Heart left ventricle (tissue), 16 donors: ENCODE measurements at regions of chr14 and their contacts with region 1.

Region 1: GRCh38 chr14:69260861-69261564 is 1.1 kb downstream of the GALNT16 start:
- DNase-seq: peak; percentile 45 to 81 (median 67)
- ATAC-seq: peak; percentile 34 to 68 (median 68)
- H3K4me3 ChIP-seq: peak overlapping the region; percentile 61 to 94 (median 68)
- H3K27ac ChIP-seq: peak overlapping the region; percentile 5 to 90 (median 82)
- H3K4me1 ChIP-seq: peaks cover 2 to 79% (median 38%) of the 10 kb centered on the region in 12 donors
- H3K27me3 ChIP-seq: peaks cover 0 to 62% (median 0%) of the 10 kb centered on the region in 9 donors
- CTCF ChIP-seq: peak; percentile 58 to 86 (median 80)
- POLR2A ChIP-seq: no peak

Region 2: DNA sequence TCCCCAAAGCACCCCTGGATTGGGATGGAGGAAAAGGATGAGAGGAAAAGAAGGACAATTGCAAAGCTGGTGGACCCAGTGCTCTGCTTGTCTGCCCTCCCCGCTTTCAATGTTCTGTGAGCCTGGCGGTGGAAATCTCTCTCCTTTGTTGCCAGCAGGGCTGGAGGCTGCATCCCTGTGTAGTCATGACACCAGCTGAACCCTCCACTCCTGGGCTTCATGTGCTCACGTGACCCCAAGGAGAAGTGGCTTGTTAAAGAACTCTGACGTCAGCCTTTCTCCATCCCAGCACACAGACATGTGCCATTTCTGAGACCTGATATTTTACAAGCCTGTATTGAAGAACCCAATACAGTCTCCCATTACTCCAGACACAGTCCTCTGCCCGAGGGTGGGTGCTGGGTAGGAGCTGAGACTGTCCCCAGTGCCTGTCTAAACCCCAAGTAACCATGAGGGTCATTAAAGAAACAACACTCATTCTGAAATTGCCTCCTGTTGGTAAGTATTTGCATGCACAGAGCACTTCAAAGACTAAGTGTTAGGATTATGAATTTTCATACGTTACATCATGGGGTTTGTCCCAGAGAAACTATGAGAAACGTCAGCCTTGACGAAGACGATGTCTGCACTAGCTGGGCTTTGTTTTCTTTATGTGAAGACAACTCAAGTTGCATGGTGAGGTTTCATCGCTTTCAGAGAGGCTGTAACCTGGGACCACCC is 20.6 kb after region 1 on chr14:
- intact Hi-C with region 1: loop called in 1 of 10 experiments (anchors 1 kb)
- DNase-seq: peak; percentile 54 to 82 (median 61)
- ATAC-seq: peak; percentile 87 to 91 (median 90)
- H3K4me3 ChIP-seq: no peak overlapping the region
- H3K27ac ChIP-seq: peak overlapping the region in 4 of 12 donors; percentile 39 to 71 (median 54)
- H3K4me1 ChIP-seq: peaks cover 0 to 27% (median 9%) of the 10 kb centered on the region in 12 donors
- H3K27me3 ChIP-seq: no peaks in the 10 kb centered on the region
- CTCF ChIP-seq: no peak
- POLR2A ChIP-seq: no peak

Region 3: DNA sequence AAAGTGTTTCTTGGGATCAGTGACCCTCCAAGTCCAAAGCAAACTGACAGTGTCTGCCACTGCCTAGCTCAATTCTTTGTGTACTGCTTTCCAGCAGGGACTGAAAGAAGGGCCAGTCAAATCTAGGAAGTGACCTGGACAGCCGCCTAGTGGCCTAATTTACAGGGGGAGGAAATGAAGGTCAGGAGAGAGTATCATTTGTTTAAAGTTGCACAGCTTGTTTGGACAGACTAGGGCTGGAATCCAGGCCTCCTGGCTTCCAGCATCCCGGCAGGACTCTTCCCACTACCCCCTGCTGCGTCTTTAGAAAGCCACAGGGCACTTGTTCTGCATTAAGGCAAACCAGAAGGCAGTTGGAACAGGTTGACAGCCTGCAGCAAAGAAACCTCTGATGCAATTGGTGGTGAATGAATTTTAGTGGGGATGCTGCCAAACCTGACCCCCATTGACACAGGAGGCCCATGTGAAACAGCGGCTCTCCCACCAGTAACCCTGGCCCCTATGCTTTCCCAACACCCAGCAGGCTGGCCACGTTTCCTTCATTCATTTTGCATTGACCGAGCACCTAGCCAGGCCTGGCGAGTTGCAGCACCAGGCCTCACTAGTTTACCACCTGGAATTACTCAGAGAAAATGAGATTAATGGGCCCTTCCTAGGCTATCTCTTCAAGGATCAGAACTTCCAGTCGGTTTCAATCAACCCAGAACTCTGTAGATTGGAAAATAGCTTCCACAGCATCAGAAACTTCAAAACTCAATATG is 27.2 kb after region 1 on chr14:
- intact Hi-C with region 1: loop called in 3 of 10 experiments (anchors 1 to 2 kb)
- DNase-seq: peak; percentile 61 to 70 (median 63)
- ATAC-seq: peak; percentile 16 to 61 (median 48)
- H3K4me3 ChIP-seq: no peak overlapping the region
- H3K27ac ChIP-seq: peak overlapping the region in 11 of 12 donors; percentile 11 to 69 (median 38)
- H3K4me1 ChIP-seq: peaks cover 3 to 70% (median 54%) of the 10 kb centered on the region in 12 donors
- H3K27me3 ChIP-seq: no peaks in the 10 kb centered on the region
- CTCF ChIP-seq: peak; percentile 28 to 60 (median 45)
- POLR2A ChIP-seq: no peak

Region 4: GRCh38 chr14:69299286-69300035 is 38.4 kb after region 1 on chr14:
- intact Hi-C with region 1: no loop called
- DNase-seq: peak in 1 of 5 donors; percentile 21
- ATAC-seq: peak in 1 of 4 donors; percentile 37
- H3K4me3 ChIP-seq: no peak overlapping the region
- H3K27ac ChIP-seq: peak overlapping the region in 1 of 12 donors; percentile 18
- H3K4me1 ChIP-seq: peaks cover 0 to 34% (median 12%) of the 10 kb centered on the region in 12 donors
- H3K27me3 ChIP-seq: no peaks in the 10 kb centered on the region
- CTCF ChIP-seq: peak in 3 of 12 donors; percentile 13 to 25 (median 17)
- POLR2A ChIP-seq: no peak

Region 5: DNA sequence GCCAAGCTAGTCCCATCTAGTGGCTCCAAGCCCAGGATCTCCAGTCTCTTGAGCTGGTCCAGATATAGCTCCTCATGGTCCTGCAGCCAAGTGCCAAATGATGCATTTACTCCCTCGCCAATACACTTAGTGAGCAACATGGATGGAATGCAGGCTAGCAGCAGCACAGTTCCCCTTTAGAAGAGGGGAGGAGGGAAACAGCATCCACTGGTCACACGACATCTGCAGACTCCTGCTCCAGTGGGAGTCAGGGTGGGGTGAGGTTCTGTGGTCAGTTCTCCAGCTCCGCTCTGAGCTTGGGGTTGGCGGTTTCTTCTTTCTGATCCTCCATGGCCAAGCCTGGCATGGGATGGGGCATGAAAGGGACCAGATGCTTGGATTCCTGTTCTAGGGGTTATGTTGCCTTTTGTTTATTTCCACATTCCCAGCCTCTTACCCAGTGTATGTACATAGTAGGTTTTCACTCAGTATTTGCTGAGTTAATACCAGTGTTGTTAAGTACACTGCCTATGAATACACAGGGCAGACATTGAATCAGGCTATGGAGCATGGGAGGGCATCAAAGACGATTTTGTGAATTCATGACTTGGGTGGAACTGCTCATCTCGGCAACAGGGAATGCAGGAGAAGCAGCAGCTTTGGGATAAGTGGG is 56.2 kb after region 1 on chr14:
- intact Hi-C with region 1: loop called in 3 of 10 experiments (anchors 1 to 5 kb)
- DNase-seq: peak in 4 of 5 donors; percentile 80 to 88 (median 82)
- ATAC-seq: peak; percentile 95 to 97 (median 95)
- H3K4me3 ChIP-seq: no peak overlapping the region
- H3K27ac ChIP-seq: peak overlapping the region in 11 of 12 donors; percentile 61 to 81 (median 74)
- H3K4me1 ChIP-seq: peaks cover 4 to 54% (median 33%) of the 10 kb centered on the region in 12 donors
- H3K27me3 ChIP-seq: no peaks in the 10 kb centered on the region
- CTCF ChIP-seq: peak in 1 of 12 donors; percentile 1
- POLR2A ChIP-seq: no peak

Region 6: DNA sequence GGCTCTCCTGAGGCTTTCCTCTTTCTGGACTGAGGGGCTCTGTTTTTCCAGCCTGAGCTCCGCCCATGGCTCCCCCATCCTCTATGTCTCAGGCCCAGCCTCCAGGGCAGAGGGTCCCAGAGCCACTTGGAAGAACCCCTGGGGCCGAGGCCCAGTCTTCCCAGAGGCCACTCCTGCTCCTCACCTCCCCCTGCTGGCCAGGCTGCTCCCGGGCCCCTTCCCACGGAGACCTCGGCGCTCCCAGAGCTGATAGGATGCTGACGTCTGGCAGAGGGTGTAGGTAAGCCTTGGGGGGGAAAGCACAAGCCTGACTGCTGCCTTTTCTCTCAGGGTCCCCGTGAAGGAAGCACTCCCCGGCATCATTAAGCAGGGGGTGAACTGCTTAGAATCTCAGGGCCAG is 85.7 kb after region 1 on chr14:
- intact Hi-C with region 1: loop called in 5 of 10 experiments (anchors 5 to 10 kb)
- DNase-seq: peak in 2 of 5 donors; percentile 52 to 71
- ATAC-seq: peak in 2 of 4 donors; percentile 14 to 32
- H3K4me3 ChIP-seq: no peak overlapping the region
- H3K27ac ChIP-seq: no peak overlapping the region
- H3K4me1 ChIP-seq: peaks cover 0 to 9% (median 5%) of the 10 kb centered on the region in 12 donors
- H3K27me3 ChIP-seq: no peaks in the 10 kb centered on the region
- CTCF ChIP-seq: peak; percentile 27 to 61 (median 50)
- POLR2A ChIP-seq: no peak

Region 7: DNA sequence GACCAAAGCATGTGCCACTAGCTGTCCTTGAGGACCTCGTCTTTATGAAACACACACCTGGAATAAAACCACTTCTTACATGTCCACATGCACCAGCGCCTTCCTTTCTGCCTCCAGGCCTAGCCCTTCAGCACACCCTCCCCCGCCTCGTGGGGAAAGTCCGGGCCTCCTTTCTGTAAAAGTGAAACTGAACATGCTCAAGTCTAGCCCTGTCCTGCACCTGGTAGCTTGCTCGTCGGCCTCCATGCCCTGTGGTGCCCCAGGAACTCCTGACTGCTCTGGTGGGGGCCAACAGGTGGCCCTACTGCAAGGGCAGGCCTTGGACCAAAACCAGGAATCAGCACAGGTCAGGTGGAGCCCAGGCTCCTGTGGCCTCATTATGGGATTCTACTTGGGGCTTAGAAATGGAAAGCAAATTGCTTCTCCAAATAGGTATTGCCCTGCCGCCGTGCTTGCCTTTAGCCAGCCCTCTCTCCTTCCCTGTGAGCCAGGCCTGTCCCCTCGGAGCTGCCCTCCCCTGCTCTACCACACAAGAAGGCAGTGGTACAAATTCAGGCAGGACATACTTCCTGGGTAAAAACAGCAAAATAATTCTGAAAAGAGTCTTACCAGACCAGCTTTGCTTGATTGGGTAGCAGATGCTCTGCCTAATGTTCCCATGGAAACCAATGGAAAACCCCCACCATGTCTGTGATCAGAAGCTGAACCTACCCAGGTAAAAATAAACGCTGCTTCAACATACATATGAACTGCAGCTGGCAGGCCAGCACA is 93.6 kb after region 1 on chr14:
- intact Hi-C with region 1: loop called in 5 of 10 experiments (anchors 5 to 10 kb)
- DNase-seq: no peak
- ATAC-seq: no peak
- H3K4me3 ChIP-seq: no peak overlapping the region
- H3K27ac ChIP-seq: peak overlapping the region in 1 of 12 donors; percentile 5
- H3K4me1 ChIP-seq: peaks cover 0 to 23% (median 11%) of the 10 kb centered on the region in 12 donors
- H3K27me3 ChIP-seq: no peaks in the 10 kb centered on the region
- CTCF ChIP-seq: no peak
- POLR2A ChIP-seq: no peak

Region 8: GRCh38 chr14:69574263-69574953 is 313.4 kb after region 1 on chr14 and contains the start of gene CCDC177:
- intact Hi-C with region 1: loop called in 2 of 10 experiments (anchors 10 kb)
- DNase-seq: peak in 2 of 5 donors; percentile 34 to 77
- ATAC-seq: peak in 3 of 4 donors; percentile 27 to 52 (median 52)
- H3K4me3 ChIP-seq: peak within 1 kb of the TSS in 9 of 12 donors; percentile 1 to 38 (median 22)
- H3K27ac ChIP-seq: no peak within 1 kb of the TSS
- H3K4me1 ChIP-seq: peaks cover 10 to 36% (median 28%) of the 10 kb centered on the region in 12 donors
- H3K27me3 ChIP-seq: peaks cover 41 to 86% (median 71%) of the 10 kb centered on the region in 9 donors
- CTCF ChIP-seq: peak; percentile 62 to 90 (median 79)
- POLR2A ChIP-seq: no peak
- total RNA-seq, gene CCDC177: not detected